CD14-positive monocyte (primary cell): ENCODE measurements at regions of chr7 and their contacts with region 1.

Region 1: GRCh38 chr7:154927624-154928143 is 75.2 kb downstream of the PAXIP1 start:
- DNase-seq: peak; percentile 76 to 91 (median 90)
- H3K4me3 ChIP-seq: peak overlapping the region; percentile 65 to 99 (median 84)
- H3K4me3 Mint-ChIP-seq: peak overlapping the region; percentile 91 to 94
- H3K27ac ChIP-seq: peak overlapping the region; percentile 72 to 95
- H3K27ac Mint-ChIP-seq: peak overlapping the region; percentile 96 to 99 (median 99)
- H3K4me1 ChIP-seq: peaks cover 11 to 12% of the 10 kb centered on the region in 2 donors
- H3K4me1 Mint-ChIP-seq: peaks cover 21% of the 10 kb centered on the region
- H3K27me3 ChIP-seq: peaks cover 0 to 4% of the 10 kb centered on the region in 2 donors
- H3K27me3 Mint-ChIP-seq: peaks cover under 1 to 4% (median 2%) of the 10 kb centered on the region in 3 donors
- CTCF ChIP-seq: peak; percentile 85

Region 2: GRCh38 chr7:155003376-155004214 is 75.9 kb after region 1 on chr7:
- intact Hi-C with region 1: loop called (anchors 2 to 5 kb)
- DNase-seq: peak; percentile 73 to 79 (median 78)
- H3K4me3 ChIP-seq: peak overlapping the region; percentile 68 to 92 (median 74)
- H3K4me3 Mint-ChIP-seq: peak overlapping the region; percentile 89 to 95
- H3K27ac ChIP-seq: peak overlapping the region in 1 of 2 donors; percentile 83
- H3K27ac Mint-ChIP-seq: peak overlapping the region; percentile 15 to 84 (median 63)
- H3K4me1 ChIP-seq: peaks cover 16 to 18% of the 10 kb centered on the region in 2 donors
- H3K4me1 Mint-ChIP-seq: peaks cover 19% of the 10 kb centered on the region
- H3K27me3 ChIP-seq: no peaks in the 10 kb centered on the region
- H3K27me3 Mint-ChIP-seq: peaks cover 0 to 2% (median 1%) of the 10 kb centered on the region in 3 donors
- CTCF ChIP-seq: no peak

Region 3: DNA sequence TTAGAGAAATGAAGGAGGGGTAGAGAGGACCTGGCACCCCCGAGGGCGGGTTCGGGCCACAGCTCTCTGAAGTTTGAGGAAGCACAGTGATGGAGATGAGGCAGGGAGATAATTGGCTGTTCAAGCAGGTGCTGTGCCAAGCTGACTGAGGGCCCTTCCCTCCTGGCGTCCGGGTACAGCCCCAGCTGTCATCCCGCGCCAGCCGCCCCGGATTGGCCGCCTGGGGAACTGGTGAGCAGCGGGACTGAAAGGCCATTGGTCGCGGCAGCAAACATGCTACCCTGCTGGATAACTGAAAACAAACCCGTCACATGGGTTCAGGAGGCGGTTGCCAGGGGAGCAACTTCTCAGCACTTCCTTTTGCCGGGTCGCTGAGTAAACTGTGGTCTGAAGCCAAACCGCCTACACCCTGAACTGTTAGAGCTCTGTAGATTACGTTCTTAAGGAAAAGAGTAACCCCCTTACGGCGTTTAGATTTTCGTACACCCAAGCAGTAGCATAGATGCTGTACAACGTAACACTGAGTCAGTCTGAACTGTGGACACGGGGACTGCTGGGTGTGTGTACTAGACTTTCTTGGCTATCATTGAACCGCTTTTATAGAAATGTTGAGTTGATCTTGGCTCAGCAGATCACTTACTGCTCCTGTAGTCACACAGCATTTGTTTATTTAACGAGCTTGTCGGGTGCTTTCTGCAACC is 371.3 kb after region 1 on chr7:
- intact Hi-C with region 1: loop called (anchors 5 kb)
- DNase-seq: peak; percentile 97
- H3K4me3 ChIP-seq: peak overlapping the region; percentile 53 to 89 (median 68)
- H3K4me3 Mint-ChIP-seq: peak overlapping the region; percentile 90 to 93
- H3K27ac ChIP-seq: peak overlapping the region; percentile 84 to 89
- H3K27ac Mint-ChIP-seq: peak overlapping the region; percentile 95 to 98 (median 97)
- H3K4me1 ChIP-seq: peaks cover 35 to 43% of the 10 kb centered on the region in 2 donors
- H3K4me1 Mint-ChIP-seq: peaks cover 46% of the 10 kb centered on the region
- H3K27me3 ChIP-seq: no peaks in the 10 kb centered on the region
- H3K27me3 Mint-ChIP-seq: peaks cover 0 to 5% (median 2%) of the 10 kb centered on the region in 3 donors
- CTCF ChIP-seq: no peak

Region 4: GRCh38 chr7:155598810-155599210 is 671.1 kb after region 1 on chr7:
- intact Hi-C with region 1: loop called in 1 of 2 experiments (anchors 10 kb)
- DNase-seq: peak; percentile 56 to 69 (median 64)
- H3K4me3 ChIP-seq: no peak overlapping the region
- H3K4me3 Mint-ChIP-seq: peak overlapping the region in 1 of 2 donors; percentile 66
- H3K27ac ChIP-seq: no peak overlapping the region
- H3K27ac Mint-ChIP-seq: no peak overlapping the region
- H3K4me1 ChIP-seq: peaks cover 37 to 39% of the 10 kb centered on the region in 2 donors
- H3K4me1 Mint-ChIP-seq: peaks cover 40% of the 10 kb centered on the region
- H3K27me3 ChIP-seq: no peaks in the 10 kb centered on the region
- H3K27me3 Mint-ChIP-seq: peaks cover 5 to 28% (median 6%) of the 10 kb centered on the region in 3 donors
- CTCF ChIP-seq: peak; percentile 94

Region 5: GRCh38 chr7:155763691-155764437 is 836.2 kb after region 1 on chr7:
- intact Hi-C with region 1: loop called in 1 of 2 experiments (anchors 10 kb)
- DNase-seq: peak; percentile 56 to 88 (median 58)
- H3K4me3 ChIP-seq: peak overlapping the region in 1 of 3 experiments; percentile 47
- H3K4me3 Mint-ChIP-seq: peak overlapping the region; percentile 56 to 76
- H3K27ac ChIP-seq: peak overlapping the region; percentile 54 to 61
- H3K27ac Mint-ChIP-seq: peak overlapping the region; percentile 71 to 90 (median 87)
- H3K4me1 ChIP-seq: peaks cover 58 to 59% of the 10 kb centered on the region in 2 donors
- H3K4me1 Mint-ChIP-seq: peaks cover 56% of the 10 kb centered on the region
- H3K27me3 ChIP-seq: no peaks in the 10 kb centered on the region
- H3K27me3 Mint-ChIP-seq: peaks cover 0 to 1% (median 0%) of the 10 kb centered on the region in 3 donors
- CTCF ChIP-seq: no peak